ENCODE measurements at regions of chr7 and their contacts with region 1.

Region 1: GRCh38 chr7:139016931-139017511 is 18.8 kb downstream of the ZC3HAV1L start:
- DNase-seq: peak; percentile 83
- H3K4me3 ChIP-seq: no peak overlapping the region
- H3K27ac ChIP-seq: no peak overlapping the region
- H3K4me1 ChIP-seq: no peaks in the 10 kb centered on the region
- H3K27me3 ChIP-seq: no peaks in the 10 kb centered on the region
- CTCF ChIP-seq: peak; percentile 82

Region 2: DNA sequence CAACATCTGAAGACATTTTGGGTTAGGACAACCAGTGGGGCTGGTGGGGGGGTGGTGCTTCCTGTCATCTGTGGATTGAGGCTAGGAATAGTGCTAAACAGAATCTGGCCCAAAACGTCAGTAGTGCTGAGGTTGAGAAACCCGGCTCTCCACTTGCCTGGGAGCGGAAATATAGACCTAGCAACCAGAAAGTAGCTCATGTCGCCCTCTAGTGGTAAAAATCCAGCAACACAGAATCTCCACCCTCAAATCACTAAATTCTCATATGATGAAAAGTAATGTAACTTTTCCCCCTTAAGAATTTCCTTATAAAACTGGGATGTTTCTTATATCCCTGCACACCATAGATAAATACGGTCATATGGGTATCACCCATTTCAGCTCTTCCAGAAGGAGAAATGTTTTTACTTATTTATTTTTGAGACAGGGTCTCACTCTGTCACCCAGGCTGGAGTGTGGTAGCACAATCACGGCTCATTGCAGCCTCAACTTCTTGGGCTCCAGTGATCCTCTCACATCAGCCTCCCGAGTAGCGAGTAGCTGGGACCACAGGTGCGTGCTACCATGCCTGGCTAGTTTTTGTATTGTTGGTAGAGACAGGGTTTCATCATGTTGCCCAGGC is 58.1 kb after region 1 on chr7:
- CTCF ChIA-PET with region 1: interaction called, 16 read pairs
- POLR2A ChIA-PET with region 1: no interaction called
- intact Hi-C with region 1: loop called (anchors 1 kb)
- DNase-seq: peak; percentile 82
- H3K4me3 ChIP-seq: no peak overlapping the region
- H3K27ac ChIP-seq: no peak overlapping the region
- H3K4me1 ChIP-seq: peaks cover 3% of the 10 kb centered on the region
- H3K27me3 ChIP-seq: no peaks in the 10 kb centered on the region
- CTCF ChIP-seq: peak; percentile 87

Region 3: GRCh38 chr7:139431010-139431409 is 414.0 kb after region 1 on chr7:
- CTCF ChIA-PET with region 1: interaction called, 11 read pairs
- POLR2A ChIA-PET with region 1: no interaction called
- intact Hi-C with region 1: no loop called
- DNase-seq: no peak
- H3K4me3 ChIP-seq: no peak overlapping the region
- H3K27ac ChIP-seq: no peak overlapping the region
- H3K4me1 ChIP-seq: no peaks in the 10 kb centered on the region
- H3K27me3 ChIP-seq: no peaks in the 10 kb centered on the region
- CTCF ChIP-seq: no peak